ENCODE measurements at regions of chr1 and their contacts with region 1.

Region 1: GRCh38 chr1:89762779-89763648 is 57.8 kb upstream of the LRRC8D start:
- DNase-seq: peak; percentile 69 to 91 (median 85)
- ATAC-seq: peak; percentile 99 to 100 (median 99)
- H3K4me3 ChIP-seq: peak overlapping the region; percentile 44 to 52
- H3K4me3 Mint-ChIP-seq: peak overlapping the region; percentile 83 to 84 (median 83)
- H3K27ac ChIP-seq: peak overlapping the region; percentile 59
- H3K27ac Mint-ChIP-seq: peak overlapping the region; percentile 82 to 95
- H3K4me1 ChIP-seq: peaks cover 19 to 37% of the 10 kb centered on the region in 2 experiments
- H3K4me1 Mint-ChIP-seq: peaks cover 48 to 59% (median 53%) of the 10 kb centered on the region in 3 donors
- H3K27me3 ChIP-seq: no peaks in the 10 kb centered on the region
- H3K27me3 Mint-ChIP-seq: no peaks in the 10 kb centered on the region

Region 2: DNA sequence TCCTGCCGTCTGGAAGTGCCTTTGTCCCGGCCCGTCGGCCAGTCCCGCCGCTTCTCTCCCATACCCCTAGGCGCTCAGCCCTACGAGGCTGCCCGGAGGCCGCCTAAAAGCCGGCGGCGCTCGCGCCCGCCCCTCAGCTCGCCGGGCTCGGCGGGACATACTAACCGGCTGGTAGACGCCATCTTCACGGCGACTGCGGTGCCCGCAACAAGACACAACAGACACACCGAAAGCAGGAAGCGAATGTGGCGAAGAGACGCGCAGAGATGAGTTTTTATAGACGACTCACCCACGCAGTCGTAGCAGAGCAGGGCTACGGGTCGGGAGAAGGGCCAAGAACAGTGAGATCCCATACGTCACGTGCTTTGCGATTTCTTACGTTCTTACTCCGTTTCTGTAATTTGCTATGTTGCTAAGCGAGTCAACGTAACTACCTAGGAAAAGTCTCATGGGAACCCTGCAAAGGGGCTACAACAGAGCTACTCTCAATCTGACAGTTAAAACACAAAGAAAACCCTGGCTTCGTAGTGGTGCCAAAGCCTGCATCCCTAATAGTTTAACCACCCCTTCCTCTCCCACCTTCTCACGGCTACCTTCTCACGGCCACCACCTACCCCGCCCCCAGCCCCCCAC is 871.6 kb before region 1 on chr1 and contains the start of gene GTF2B:
- CTCF ChIA-PET with region 1: interaction called in 1 of 2 experiments, 10 read pairs
- POLR2A ChIA-PET with region 1: no interaction called
- DNase-seq: peak; percentile 84 to 98 (median 93)
- ATAC-seq: peak; percentile 87 to 93 (median 90)
- H3K4me3 ChIP-seq: peak within 1 kb of the TSS; percentile 94 to 100
- H3K4me3 Mint-ChIP-seq: peak within 1 kb of the TSS; percentile 86 to 99 (median 97)
- H3K27ac ChIP-seq: peak within 1 kb of the TSS; percentile 86
- H3K27ac Mint-ChIP-seq: peak within 1 kb of the TSS; percentile 93 to 98
- H3K4me1 ChIP-seq: peaks cover 14 to 22% of the 10 kb centered on the region in 2 experiments
- H3K4me1 Mint-ChIP-seq: peaks cover 44 to 46% (median 45%) of the 10 kb centered on the region in 3 donors
- H3K27me3 ChIP-seq: no peaks in the 10 kb centered on the region
- H3K27me3 Mint-ChIP-seq: no peaks in the 10 kb centered on the region
- total RNA-seq, gene GTF2B: 34.2 to 54.5 (median 38.7) TPM

Region 3: GRCh38 chr1:89566761-89567174 is 196.2 kb before region 1 on chr1:
- CTCF ChIA-PET with region 1: no interaction called
- POLR2A ChIA-PET with region 1: no interaction called
- DNase-seq: no peak
- ATAC-seq: no peak
- H3K4me3 ChIP-seq: no peak overlapping the region
- H3K4me3 Mint-ChIP-seq: no peak overlapping the region
- H3K27ac ChIP-seq: no peak overlapping the region
- H3K27ac Mint-ChIP-seq: peak overlapping the region in 1 of 2 donors; percentile 24
- H3K4me1 ChIP-seq: peaks cover 0 to 2% of the 10 kb centered on the region in 2 experiments
- H3K4me1 Mint-ChIP-seq: peaks cover 45 to 59% (median 49%) of the 10 kb centered on the region in 3 donors
- H3K27me3 ChIP-seq: no peaks in the 10 kb centered on the region
- H3K27me3 Mint-ChIP-seq: no peaks in the 10 kb centered on the region

Region 4: DNA sequence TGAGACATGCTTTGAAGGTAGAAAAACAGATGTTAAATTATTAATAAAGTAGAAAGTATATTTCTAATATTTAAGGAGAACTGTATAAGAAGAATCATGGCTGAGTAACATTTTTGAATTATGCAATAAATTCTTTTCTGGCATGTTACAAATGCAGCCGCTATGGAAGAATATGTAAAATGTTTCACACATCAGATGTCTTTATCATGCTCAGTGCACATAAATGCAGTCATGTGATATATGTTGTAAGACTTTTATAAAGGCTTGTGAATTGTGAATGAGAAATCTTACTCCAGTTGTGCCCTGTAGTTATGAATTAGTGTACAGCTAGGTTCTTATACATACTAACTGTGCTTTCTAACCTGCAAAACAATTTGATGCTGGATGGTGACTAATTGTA is 184.9 kb before region 1 on chr1:
- CTCF ChIA-PET with region 1: interaction called, 7 to 11 read pairs
- POLR2A ChIA-PET with region 1: interaction called in 1 of 2 experiments, 4 read pairs
- DNase-seq: no peak
- ATAC-seq: no peak
- H3K4me3 ChIP-seq: no peak overlapping the region
- H3K4me3 Mint-ChIP-seq: no peak overlapping the region
- H3K27ac ChIP-seq: no peak overlapping the region
- H3K27ac Mint-ChIP-seq: no peak overlapping the region
- H3K4me1 ChIP-seq: no peaks in the 10 kb centered on the region
- H3K4me1 Mint-ChIP-seq: peaks cover 11 to 18% (median 11%) of the 10 kb centered on the region in 3 donors
- H3K27me3 ChIP-seq: no peaks in the 10 kb centered on the region
- H3K27me3 Mint-ChIP-seq: no peaks in the 10 kb centered on the region

Region 5: DNA sequence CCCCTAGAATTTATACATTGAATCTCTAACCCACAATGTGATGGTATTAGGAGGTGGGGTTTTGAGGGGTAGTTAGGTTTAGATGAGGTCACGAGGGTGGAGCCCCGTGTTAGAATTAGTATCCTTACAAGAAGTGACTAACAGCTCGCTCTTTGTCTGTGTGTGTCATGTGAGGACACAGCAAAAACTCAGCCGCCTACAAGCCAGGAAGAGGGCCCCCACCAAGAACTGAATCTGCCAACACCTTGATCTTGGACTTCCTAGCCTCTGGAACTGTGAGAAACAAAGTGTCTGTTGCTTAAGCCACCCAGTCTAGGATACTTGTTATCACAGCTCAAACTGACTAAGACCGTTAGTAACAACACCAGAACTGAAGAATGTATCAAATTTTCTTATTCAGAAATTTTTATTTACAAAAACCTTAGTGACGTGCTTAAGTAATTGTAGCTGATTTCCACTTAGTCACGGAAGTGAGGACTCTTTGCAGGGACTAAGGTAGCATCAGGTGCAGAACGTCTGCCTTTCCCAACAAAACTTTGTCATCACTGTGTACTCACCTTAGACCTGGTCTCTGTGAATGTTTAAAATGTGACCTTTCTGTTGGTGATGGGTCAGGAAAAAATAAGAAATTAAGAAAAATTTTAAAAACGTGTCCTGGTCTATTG is 154.6 kb before region 1 on chr1:
- CTCF ChIA-PET with region 1: interaction called, 3 to 25 read pairs
- POLR2A ChIA-PET with region 1: interaction called in 1 of 2 experiments, 10 read pairs
- DNase-seq: peak in 34 of 35 experiments; percentile 52 to 89 (median 75)
- ATAC-seq: peak; percentile 49 to 73 (median 58)
- H3K4me3 ChIP-seq: peak overlapping the region in 1 of 2 donors; percentile 41
- H3K4me3 Mint-ChIP-seq: peak overlapping the region; percentile 76 to 85 (median 84)
- H3K27ac ChIP-seq: peak overlapping the region; percentile 88
- H3K27ac Mint-ChIP-seq: peak overlapping the region; percentile 99 to 100
- H3K4me1 ChIP-seq: peaks cover 85% of the 10 kb centered on the region in 2 experiments
- H3K4me1 Mint-ChIP-seq: peaks cover 91 to 96% (median 96%) of the 10 kb centered on the region in 3 donors
- H3K27me3 ChIP-seq: no peaks in the 10 kb centered on the region
- H3K27me3 Mint-ChIP-seq: no peaks in the 10 kb centered on the region

Region 6: DNA sequence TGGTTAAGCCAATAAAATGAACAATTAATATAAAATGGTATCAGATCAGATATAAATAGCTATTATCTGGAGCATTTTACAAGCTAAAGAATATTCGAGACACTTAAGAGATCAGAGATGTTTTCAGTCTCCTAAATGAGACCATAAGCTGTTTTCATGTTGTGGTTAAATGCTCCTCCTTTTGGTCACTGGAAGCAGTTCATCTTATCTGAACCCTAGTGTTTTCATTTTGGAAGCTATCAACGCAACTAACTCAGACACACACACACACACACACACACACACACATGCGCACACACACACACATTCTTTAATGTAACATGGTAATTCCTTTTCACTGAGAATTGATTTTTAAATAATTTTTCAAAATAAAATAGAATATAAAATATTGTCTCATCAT is 140.1 kb before region 1 on chr1:
- CTCF ChIA-PET with region 1: interaction called, 15 to 25 read pairs
- POLR2A ChIA-PET with region 1: interaction called in 1 of 2 experiments, 5 read pairs
- DNase-seq: peak in 1 of 35 experiments; percentile 67
- ATAC-seq: peak; percentile 54 to 67 (median 64)
- H3K4me3 ChIP-seq: no peak overlapping the region
- H3K4me3 Mint-ChIP-seq: no peak overlapping the region
- H3K27ac ChIP-seq: no peak overlapping the region
- H3K27ac Mint-ChIP-seq: peak overlapping the region; percentile 72 to 75
- H3K4me1 ChIP-seq: peaks cover 2 to 7% of the 10 kb centered on the region in 2 experiments
- H3K4me1 Mint-ChIP-seq: peaks cover 57 to 66% (median 66%) of the 10 kb centered on the region in 3 donors
- H3K27me3 ChIP-seq: no peaks in the 10 kb centered on the region
- H3K27me3 Mint-ChIP-seq: no peaks in the 10 kb centered on the region

Region 7: GRCh38 chr1:89719502-89720306 is 43.3 kb before region 1 on chr1:
- CTCF ChIA-PET with region 1: interaction called, 4 to 18 read pairs
- POLR2A ChIA-PET with region 1: interaction called in 1 of 2 experiments, 3 read pairs
- DNase-seq: peak in 1 of 35 experiments; percentile 54
- ATAC-seq: peak; percentile 68 to 80 (median 77)
- H3K4me3 ChIP-seq: no peak overlapping the region
- H3K4me3 Mint-ChIP-seq: peak overlapping the region; percentile 26 to 62 (median 62)
- H3K27ac ChIP-seq: peak overlapping the region; percentile 78
- H3K27ac Mint-ChIP-seq: peak overlapping the region; percentile 95 to 99
- H3K4me1 ChIP-seq: peaks cover 19 to 23% of the 10 kb centered on the region in 2 experiments
- H3K4me1 Mint-ChIP-seq: peaks cover 65 to 87% (median 85%) of the 10 kb centered on the region in 3 donors
- H3K27me3 ChIP-seq: no peaks in the 10 kb centered on the region
- H3K27me3 Mint-ChIP-seq: no peaks in the 10 kb centered on the region

Region 8: DNA sequence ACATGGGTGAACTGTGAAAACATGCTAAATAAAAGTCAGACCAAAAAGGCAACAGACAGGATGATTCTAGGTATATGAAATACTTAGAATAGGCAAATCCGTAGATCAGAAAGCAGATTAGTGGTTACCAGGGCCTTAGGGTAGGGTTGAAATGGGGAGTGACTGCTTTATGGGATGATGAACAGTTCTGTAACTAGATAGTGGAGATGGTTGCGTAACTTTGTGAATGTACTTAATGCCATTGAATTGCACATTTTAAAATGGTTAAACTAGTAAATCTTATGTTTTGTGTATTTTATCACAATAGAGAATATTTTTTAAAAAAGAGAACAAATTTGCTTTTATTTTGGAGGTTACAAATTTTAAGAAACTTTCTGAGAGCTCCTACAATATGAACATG is 249.3 kb after region 1 on chr1:
- CTCF ChIA-PET with region 1: no interaction called
- POLR2A ChIA-PET with region 1: no interaction called
- DNase-seq: no peak
- ATAC-seq: no peak
- H3K4me3 ChIP-seq: no peak overlapping the region
- H3K4me3 Mint-ChIP-seq: no peak overlapping the region
- H3K27ac ChIP-seq: no peak overlapping the region
- H3K27ac Mint-ChIP-seq: no peak overlapping the region
- H3K4me1 ChIP-seq: no peaks in the 10 kb centered on the region
- H3K4me1 Mint-ChIP-seq: peaks cover 0 to 16% (median 13%) of the 10 kb centered on the region in 3 donors
- H3K27me3 ChIP-seq: no peaks in the 10 kb centered on the region
- H3K27me3 Mint-ChIP-seq: no peaks in the 10 kb centered on the region